ENCODE measurements at regions of chr12 and their contacts with region 1.

Region 1: GRCh38 chr12:50517456-50518048 is 12.8 kb downstream of the DIP2B start:
- DNase-seq: no peak

Region 2: GRCh38 chr12:50572271-50572670 is 54.7 kb after region 1 on chr12:
- intact Hi-C with region 1: loop called (anchors 5 kb)
- DNase-seq: no peak